CD8-positive, alpha-beta T cell (primary cell): ENCODE measurements at regions of chr13 and their contacts with region 1.

Region 1: DNA sequence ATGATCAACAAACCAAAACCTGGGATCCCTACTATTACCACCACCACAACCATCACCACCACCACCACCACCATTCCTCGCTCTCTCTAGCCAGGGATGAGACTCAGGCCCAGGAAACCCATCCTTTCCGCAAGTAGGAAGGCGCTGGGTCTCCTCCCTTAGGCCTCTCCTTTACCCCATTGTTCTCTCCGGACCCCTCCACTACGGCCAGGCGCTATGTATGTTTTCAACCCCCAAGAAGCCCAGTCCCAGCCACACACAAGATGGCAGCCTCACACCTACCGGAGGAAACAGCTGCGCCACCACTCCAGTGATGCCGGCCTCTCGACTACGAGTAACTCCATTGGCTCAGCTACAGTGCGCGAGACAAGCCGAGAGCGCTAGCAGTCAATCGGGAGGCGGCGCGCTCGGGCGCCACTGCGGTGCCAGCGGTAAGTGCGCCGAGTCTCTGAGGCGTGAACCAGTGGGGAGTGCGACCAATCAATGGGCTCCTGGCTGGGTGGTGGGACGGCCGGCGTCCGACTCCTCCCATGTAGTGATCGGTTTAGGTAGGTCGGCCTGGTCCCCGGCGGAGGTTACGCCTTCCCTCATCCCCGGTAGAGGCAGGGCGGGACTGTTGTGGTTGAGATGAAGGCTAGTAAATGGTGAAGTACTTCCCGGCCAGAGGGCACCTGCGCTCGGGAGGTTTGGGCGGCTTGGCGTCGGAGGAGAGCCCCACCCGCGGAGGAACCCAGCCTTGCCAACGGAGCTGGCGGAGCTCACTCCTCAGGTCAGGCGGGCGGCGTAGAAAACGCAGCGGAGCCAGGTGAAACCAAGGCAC is at the starts of genes CAB39L and SETDB2:
- DNase-seq: peak; percentile 97 to 100 (median 99)
- ATAC-seq: peak; percentile 89
- H3K4me3 ChIP-seq: peak within 1 kb of the TSS; percentile 72 to 76
- H3K4me3 Mint-ChIP-seq: peak within 1 kb of the TSS; percentile 93
- H3K27ac ChIP-seq: peak within 1 kb of the TSS; percentile 91 to 93
- H3K27ac Mint-ChIP-seq: peak within 1 kb of the TSS; percentile 98
- H3K4me1 ChIP-seq: peaks cover 42% of the 10 kb centered on the region
- H3K4me1 Mint-ChIP-seq: peaks cover 51% of the 10 kb centered on the region
- H3K27me3 ChIP-seq: no peaks in the 10 kb centered on the region
- H3K27me3 Mint-ChIP-seq: peaks cover 2% of the 10 kb centered on the region
- CTCF ChIP-seq: no peak
- total RNA-seq, gene CAB39L: 1.6 to 2.1 TPM
- total RNA-seq, gene SETDB2: 8.4 to 9.3 TPM

Region 2: GRCh38 chr13:48037346-48038173 is 1406.4 kb before region 1 on chr13 and contains the start of gene NUDT15:
- CTCF ChIA-PET with region 1: no interaction called
- POLR2A ChIA-PET with region 1: interaction called, 7 read pairs
- intact Hi-C with region 1: loop called (anchors 2 to 5 kb)
- DNase-seq: peak; percentile 88 to 99 (median 97)
- ATAC-seq: peak; percentile 90
- H3K4me3 ChIP-seq: peak within 1 kb of the TSS; percentile 81 to 96
- H3K4me3 Mint-ChIP-seq: peak within 1 kb of the TSS; percentile 97
- H3K27ac ChIP-seq: peak within 1 kb of the TSS; percentile 99
- H3K27ac Mint-ChIP-seq: peak within 1 kb of the TSS; percentile 98
- H3K4me1 ChIP-seq: peaks cover 20% of the 10 kb centered on the region
- H3K4me1 Mint-ChIP-seq: peaks cover 32% of the 10 kb centered on the region
- H3K27me3 ChIP-seq: no peaks in the 10 kb centered on the region
- H3K27me3 Mint-ChIP-seq: no peaks in the 10 kb centered on the region
- CTCF ChIP-seq: peak; percentile 99
- total RNA-seq, gene NUDT15: 23.8 to 24.9 TPM

Region 3: DNA sequence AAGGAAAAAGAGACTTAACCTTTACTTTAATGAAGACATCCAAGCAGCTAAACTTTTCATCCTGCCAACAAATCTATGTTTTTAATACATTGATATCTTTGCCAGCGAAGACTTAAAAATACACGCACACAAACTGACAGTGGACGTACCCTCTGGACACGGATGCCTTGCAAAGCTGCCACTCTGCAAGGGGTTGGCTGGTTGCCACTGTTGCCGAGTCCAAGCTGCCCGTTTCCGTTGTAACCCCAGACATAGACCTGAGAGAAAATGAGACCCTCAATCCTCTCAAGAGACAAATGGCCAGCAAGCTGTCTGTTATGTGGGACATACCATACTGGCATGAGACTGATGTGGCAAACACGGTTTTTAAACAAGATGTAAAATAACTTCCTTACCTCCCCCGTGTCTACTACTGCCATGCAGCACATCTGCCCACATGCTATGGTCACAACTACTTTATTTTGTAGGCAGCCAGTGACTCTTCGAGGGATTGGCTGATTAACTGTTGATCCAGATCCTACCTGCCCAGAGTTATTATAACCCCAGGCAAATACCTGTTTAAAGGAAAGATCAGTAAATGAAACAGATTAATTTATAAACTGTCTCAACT is 932.2 kb before region 1 on chr13:
- CTCF ChIA-PET with region 1: no interaction called
- POLR2A ChIA-PET with region 1: no interaction called
- intact Hi-C with region 1: no loop called
- DNase-seq: no peak
- ATAC-seq: no peak
- H3K4me3 ChIP-seq: no peak overlapping the region
- H3K4me3 Mint-ChIP-seq: no peak overlapping the region
- H3K27ac ChIP-seq: no peak overlapping the region
- H3K27ac Mint-ChIP-seq: no peak overlapping the region
- H3K4me1 ChIP-seq: peaks cover 4% of the 10 kb centered on the region
- H3K4me1 Mint-ChIP-seq: peaks cover 13% of the 10 kb centered on the region
- H3K27me3 ChIP-seq: no peaks in the 10 kb centered on the region
- H3K27me3 Mint-ChIP-seq: no peaks in the 10 kb centered on the region
- CTCF ChIP-seq: no peak

Region 4: GRCh38 chr13:49110122-49110912 is 333.6 kb before region 1 on chr13:
- CTCF ChIA-PET with region 1: no interaction called
- POLR2A ChIA-PET with region 1: no interaction called
- intact Hi-C with region 1: loop called (anchors 5 kb)
- DNase-seq: peak; percentile 26 to 94 (median 76)
- ATAC-seq: peak; percentile 73
- H3K4me3 ChIP-seq: peak overlapping the region; percentile 62 to 78
- H3K4me3 Mint-ChIP-seq: peak overlapping the region; percentile 87
- H3K27ac ChIP-seq: peak overlapping the region; percentile 56 to 65
- H3K27ac Mint-ChIP-seq: peak overlapping the region; percentile 85
- H3K4me1 ChIP-seq: peaks cover 42% of the 10 kb centered on the region
- H3K4me1 Mint-ChIP-seq: peaks cover 49% of the 10 kb centered on the region
- H3K27me3 ChIP-seq: no peaks in the 10 kb centered on the region
- H3K27me3 Mint-ChIP-seq: no peaks in the 10 kb centered on the region
- CTCF ChIP-seq: no peak

Region 5: DNA sequence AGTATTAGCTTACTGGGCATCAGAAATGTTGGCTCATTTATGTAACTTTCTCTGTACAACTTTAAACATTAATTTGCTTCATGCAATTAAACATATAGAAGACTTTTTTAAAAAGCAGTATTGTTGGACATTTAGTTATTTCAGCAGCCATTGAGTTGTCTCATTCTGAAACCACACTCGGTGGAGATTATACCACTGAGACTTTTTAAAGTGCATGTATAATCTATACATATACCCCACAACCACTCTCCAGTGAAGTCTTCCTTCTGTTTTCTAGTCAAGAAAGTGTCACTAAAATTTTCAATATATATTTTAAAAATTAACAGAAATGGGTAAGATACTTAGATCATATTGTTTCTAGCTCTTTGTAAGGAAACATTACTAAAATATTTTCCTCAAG is 15.7 kb after region 1 on chr13:
- CTCF ChIA-PET with region 1: no interaction called
- POLR2A ChIA-PET with region 1: interaction called, 15 read pairs
- intact Hi-C with region 1: loop called in 1 of 2 experiments (anchors 1 kb)
- DNase-seq: no peak
- ATAC-seq: no peak
- H3K4me3 ChIP-seq: no peak overlapping the region
- H3K4me3 Mint-ChIP-seq: no peak overlapping the region
- H3K27ac ChIP-seq: no peak overlapping the region
- H3K27ac Mint-ChIP-seq: no peak overlapping the region
- H3K4me1 ChIP-seq: peaks cover 4% of the 10 kb centered on the region
- H3K4me1 Mint-ChIP-seq: peaks cover 17% of the 10 kb centered on the region
- H3K27me3 ChIP-seq: no peaks in the 10 kb centered on the region
- H3K27me3 Mint-ChIP-seq: no peaks in the 10 kb centered on the region
- CTCF ChIP-seq: no peak

Region 6: DNA sequence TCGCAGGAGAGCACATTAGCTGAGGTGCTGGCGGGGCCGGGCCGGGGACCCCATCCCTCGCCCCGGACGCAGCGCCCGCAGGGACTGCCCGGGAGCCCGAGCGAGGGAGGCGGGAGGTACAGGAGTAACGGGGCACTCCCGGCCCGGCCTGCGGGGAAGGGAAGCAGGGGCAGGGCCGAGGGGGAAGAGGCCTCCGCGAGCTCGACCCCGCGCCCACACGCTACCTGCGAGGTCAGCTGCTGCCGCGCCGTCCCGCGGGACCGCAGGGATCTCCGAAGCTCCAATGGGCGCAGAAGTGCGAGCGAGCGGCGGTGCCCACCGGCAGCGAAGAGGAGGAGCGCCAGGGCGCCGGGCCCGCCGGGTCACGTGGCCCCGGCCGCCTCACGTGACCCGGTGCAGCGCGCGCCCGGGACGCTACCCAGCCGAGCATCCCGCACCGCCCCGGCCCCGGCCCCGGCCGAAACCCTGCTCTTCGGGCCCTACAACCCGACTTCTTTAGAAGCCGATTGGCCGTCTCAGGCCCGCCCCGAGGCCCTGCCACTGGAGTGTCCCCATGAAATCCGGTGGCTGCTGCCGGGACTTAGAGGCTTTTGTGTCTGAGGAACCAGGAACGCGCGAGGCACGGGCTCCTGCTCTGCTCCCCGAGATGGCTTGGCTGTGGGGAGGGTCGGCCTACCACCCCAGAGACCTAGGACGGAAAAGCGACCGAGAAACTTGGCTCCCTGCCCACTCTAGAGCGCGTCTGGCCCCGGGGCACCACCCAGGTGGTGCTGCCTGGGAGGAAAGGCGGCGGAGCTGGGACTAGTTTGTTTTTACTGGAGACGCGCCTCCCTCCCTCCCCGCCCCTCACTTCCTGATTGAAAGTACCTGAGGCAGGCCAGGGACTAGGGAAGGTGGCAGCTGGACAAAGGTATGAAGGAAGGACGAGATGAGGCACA is 141.6 kb after region 1 on chr13 and contains the start of gene RCBTB1:
- CTCF ChIA-PET with region 1: no interaction called
- POLR2A ChIA-PET with region 1: interaction called, 18 read pairs
- intact Hi-C with region 1: loop called (anchors 1 to 2 kb)
- DNase-seq: peak; percentile 33 to 88 (median 68)
- ATAC-seq: peak; percentile 88
- H3K4me3 ChIP-seq: peak within 1 kb of the TSS; percentile 89 to 97
- H3K4me3 Mint-ChIP-seq: peak within 1 kb of the TSS; percentile 90
- H3K27ac ChIP-seq: peak within 1 kb of the TSS; percentile 71 to 86
- H3K27ac Mint-ChIP-seq: peak within 1 kb of the TSS; percentile 92
- H3K4me1 ChIP-seq: peaks cover 9% of the 10 kb centered on the region
- H3K4me1 Mint-ChIP-seq: peaks cover 36% of the 10 kb centered on the region
- H3K27me3 ChIP-seq: no peaks in the 10 kb centered on the region
- H3K27me3 Mint-ChIP-seq: no peaks in the 10 kb centered on the region
- CTCF ChIP-seq: no peak
- total RNA-seq, gene RCBTB1: 12.1 to 14.2 TPM

Region 7: DNA sequence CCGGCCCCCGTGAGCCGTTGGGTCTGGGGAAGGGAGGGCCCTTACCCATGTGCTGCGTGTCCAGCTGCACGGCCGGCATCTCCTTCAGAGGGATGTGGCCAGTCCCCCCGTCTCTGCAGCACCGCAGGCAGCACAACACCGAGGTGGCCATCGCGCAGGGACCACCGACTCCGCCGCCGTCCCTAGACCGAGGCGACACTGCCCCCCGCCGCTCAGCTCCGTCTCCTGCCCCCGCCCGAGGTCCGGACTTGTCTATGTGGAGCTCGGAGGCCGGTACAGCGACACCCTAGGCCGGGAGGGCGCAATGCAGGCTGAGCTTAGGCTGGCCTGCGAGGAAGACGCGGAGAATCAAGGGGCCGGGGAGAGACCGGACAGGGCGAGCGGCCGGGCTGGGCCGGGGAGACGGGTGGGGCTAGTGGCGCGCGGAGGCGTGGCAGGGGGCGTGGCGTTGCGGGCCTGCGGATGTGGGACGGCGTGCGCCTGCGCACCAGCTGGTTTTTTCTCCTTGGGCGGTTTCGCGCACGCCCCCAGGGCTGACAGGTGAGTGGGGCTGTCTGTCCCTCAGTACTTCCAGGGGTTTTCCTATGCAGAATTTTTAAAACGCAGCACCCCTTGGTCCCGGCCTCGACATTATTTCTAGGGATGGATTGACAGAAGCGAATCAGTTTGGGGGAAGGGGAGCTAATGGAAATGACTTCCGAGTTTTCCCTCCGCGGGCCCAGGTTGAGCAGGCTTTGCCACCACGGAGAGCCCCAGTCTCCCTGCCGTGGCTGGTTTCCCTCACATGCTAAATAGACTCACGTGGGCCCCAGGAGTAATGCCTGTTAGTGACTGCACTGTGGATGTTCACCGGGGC is 492.4 kb after region 1 on chr13 and contains the start of gene SPRYD7:
- CTCF ChIA-PET with region 1: no interaction called
- POLR2A ChIA-PET with region 1: interaction called, 3 read pairs
- intact Hi-C with region 1: loop called (anchors 2 kb)
- DNase-seq: peak; percentile 82 to 97 (median 94)
- ATAC-seq: peak; percentile 85
- H3K4me3 ChIP-seq: peak within 1 kb of the TSS; percentile 81 to 98
- H3K4me3 Mint-ChIP-seq: peak within 1 kb of the TSS; percentile 88
- H3K27ac ChIP-seq: peak within 1 kb of the TSS; percentile 37 to 44
- H3K27ac Mint-ChIP-seq: peak within 1 kb of the TSS; percentile 81
- H3K4me1 ChIP-seq: peaks cover 14% of the 10 kb centered on the region
- H3K4me1 Mint-ChIP-seq: peaks cover 19% of the 10 kb centered on the region
- H3K27me3 ChIP-seq: no peaks in the 10 kb centered on the region
- H3K27me3 Mint-ChIP-seq: no peaks in the 10 kb centered on the region
- CTCF ChIP-seq: peak; percentile 62
- total RNA-seq, gene SPRYD7: 1.2 to 1.4 TPM

Region 8: DNA sequence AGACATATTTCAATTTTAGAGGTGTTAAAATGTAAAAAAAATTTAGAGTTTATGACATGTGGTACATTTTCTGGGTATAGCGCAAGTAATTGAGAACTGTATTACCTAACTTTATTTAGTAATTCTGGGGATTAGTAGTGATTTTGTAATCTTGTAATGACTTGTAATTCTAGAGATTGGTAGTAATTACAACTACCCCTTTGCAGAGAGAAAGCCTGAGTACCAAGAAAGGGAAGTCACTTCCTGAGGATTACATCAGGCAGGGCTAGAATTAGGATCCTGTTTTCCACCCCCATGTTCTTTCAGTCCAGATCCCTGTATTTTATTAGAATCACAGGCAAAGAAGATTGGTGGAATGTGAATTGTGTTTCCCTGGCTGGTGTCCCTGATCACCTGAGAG is 846.3 kb after region 1 on chr13:
- CTCF ChIA-PET with region 1: no interaction called
- POLR2A ChIA-PET with region 1: no interaction called
- intact Hi-C with region 1: no loop called
- DNase-seq: peak in 1 of 9 experiments; percentile 16
- ATAC-seq: no peak
- H3K4me3 ChIP-seq: no peak overlapping the region
- H3K4me3 Mint-ChIP-seq: no peak overlapping the region
- H3K27ac ChIP-seq: no peak overlapping the region
- H3K27ac Mint-ChIP-seq: no peak overlapping the region
- H3K4me1 ChIP-seq: no peaks in the 10 kb centered on the region
- H3K4me1 Mint-ChIP-seq: no peaks in the 10 kb centered on the region
- H3K27me3 ChIP-seq: no peaks in the 10 kb centered on the region
- H3K27me3 Mint-ChIP-seq: no peaks in the 10 kb centered on the region
- CTCF ChIP-seq: no peak

Region 9: DNA sequence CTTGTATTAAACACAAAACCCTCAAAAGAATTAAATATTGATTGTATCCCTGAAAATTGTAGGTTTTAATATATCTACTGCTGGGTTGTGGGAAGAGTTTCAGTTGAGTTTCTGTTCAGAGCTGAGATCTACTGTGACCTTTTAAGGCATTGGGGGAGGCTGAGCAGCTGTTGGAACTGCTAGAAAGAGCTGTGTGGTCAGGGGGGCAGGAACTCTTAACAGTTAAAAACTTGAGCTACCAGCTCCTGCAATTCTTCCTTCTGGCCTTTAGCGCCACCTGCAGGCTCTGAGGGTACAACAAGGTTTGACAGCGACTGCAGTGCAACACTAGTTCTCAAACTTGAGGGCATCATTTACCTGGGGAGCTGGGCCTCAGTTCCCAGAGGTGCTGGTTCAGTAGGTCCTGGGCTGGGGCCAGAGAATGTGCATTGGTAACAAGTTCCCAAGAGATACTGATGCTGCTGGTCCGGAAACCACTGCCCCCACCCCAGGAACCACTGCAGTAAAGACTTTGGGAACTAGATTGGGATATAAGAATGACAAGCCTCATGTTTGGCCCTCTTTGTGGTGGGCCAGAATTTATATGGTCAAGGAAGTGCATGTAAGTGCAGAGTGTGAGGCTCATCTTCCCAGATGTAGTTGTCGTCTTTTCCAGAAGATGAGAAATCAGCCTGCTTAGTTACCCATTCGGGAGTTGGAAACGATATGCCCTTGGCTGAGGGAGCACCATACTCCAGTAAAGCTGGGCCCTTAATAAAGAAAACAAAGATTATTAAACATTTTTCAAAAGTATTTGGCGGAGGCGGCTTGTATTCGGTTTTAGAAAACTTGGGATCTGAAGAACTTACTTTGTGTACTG is 1468.3 kb after region 1 on chr13:
- CTCF ChIA-PET with region 1: no interaction called
- POLR2A ChIA-PET with region 1: no interaction called
- intact Hi-C with region 1: loop called (anchors 2 to 10 kb)
- DNase-seq: peak; percentile 85 to 96 (median 92)
- ATAC-seq: peak; percentile 59
- H3K4me3 ChIP-seq: peak overlapping the region; percentile 78 to 89
- H3K4me3 Mint-ChIP-seq: peak overlapping the region; percentile 92
- H3K27ac ChIP-seq: peak overlapping the region in 1 of 2 experiments; percentile 86
- H3K27ac Mint-ChIP-seq: peak overlapping the region; percentile 92
- H3K4me1 ChIP-seq: peaks cover 48% of the 10 kb centered on the region
- H3K4me1 Mint-ChIP-seq: peaks cover 59% of the 10 kb centered on the region
- H3K27me3 ChIP-seq: no peaks in the 10 kb centered on the region
- H3K27me3 Mint-ChIP-seq: no peaks in the 10 kb centered on the region
- CTCF ChIP-seq: peak; percentile 87